ENCODE measurements at regions of chr16 and their contacts with region 1.

Region 1: DNA sequence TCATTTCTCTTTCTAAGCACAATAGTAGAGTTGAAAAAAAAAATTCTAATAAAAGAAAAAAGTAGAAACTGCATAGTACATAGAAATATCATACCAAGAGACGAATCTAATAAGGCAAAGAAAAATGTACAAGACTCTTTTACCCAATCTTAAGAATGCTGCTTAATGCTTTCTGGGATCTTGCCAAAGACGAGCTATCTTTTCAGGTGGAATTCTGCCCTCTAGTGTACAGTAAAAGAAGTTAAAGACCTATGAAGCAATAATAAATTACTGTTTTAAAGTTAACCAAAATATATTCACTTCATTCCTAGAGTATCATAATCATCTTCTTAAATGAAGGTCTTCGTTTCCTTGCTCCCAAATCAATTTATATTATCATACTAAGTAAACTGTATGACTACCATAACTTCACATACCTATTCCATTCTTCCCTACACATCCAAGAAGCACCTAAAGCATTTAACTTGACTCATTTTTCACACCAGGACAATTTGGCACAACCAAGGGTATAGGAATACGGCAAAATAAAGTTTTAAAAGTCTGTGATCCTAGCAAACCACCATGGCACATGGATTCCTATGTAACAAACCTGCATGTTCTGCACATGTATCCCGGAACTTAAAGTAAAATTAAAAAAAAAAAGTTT is 47.7 kb downstream of the CFDP1 start:
- DNase-seq: peak; percentile 24 to 76
- H3K4me3 ChIP-seq: no peak overlapping the region
- H3K4me1 ChIP-seq: no peaks in the 10 kb centered on the region
- H3K27me3 ChIP-seq: no peaks in the 10 kb centered on the region

Region 2: GRCh38 chr16:75198135-75198600 is 187.5 kb before region 1 on chr16:
- in situ Hi-C with region 1: loop called (anchors 5 kb)
- DNase-seq: no peak
- H3K4me3 ChIP-seq: no peak overlapping the region
- H3K4me1 ChIP-seq: no peaks in the 10 kb centered on the region
- H3K27me3 ChIP-seq: peaks cover 15% of the 10 kb centered on the region

Region 3: GRCh38 chr16:75244844-75245758 is 140.5 kb before region 1 on chr16:
- in situ Hi-C with region 1: no loop called
- DNase-seq: no peak
- H3K4me3 ChIP-seq: no peak overlapping the region
- H3K4me1 ChIP-seq: no peaks in the 10 kb centered on the region
- H3K27me3 ChIP-seq: no peaks in the 10 kb centered on the region

Region 4: GRCh38 chr16:76246624-76247023 is 861.0 kb after region 1 on chr16:
- in situ Hi-C with region 1: no loop called
- DNase-seq: no peak
- H3K4me3 ChIP-seq: no peak overlapping the region
- H3K4me1 ChIP-seq: no peaks in the 10 kb centered on the region
- H3K27me3 ChIP-seq: no peaks in the 10 kb centered on the region

Measured in HAP-1 (cell line).